ENCODE measurements at regions of chr17 and their contacts with region 1.

Region 1: DNA sequence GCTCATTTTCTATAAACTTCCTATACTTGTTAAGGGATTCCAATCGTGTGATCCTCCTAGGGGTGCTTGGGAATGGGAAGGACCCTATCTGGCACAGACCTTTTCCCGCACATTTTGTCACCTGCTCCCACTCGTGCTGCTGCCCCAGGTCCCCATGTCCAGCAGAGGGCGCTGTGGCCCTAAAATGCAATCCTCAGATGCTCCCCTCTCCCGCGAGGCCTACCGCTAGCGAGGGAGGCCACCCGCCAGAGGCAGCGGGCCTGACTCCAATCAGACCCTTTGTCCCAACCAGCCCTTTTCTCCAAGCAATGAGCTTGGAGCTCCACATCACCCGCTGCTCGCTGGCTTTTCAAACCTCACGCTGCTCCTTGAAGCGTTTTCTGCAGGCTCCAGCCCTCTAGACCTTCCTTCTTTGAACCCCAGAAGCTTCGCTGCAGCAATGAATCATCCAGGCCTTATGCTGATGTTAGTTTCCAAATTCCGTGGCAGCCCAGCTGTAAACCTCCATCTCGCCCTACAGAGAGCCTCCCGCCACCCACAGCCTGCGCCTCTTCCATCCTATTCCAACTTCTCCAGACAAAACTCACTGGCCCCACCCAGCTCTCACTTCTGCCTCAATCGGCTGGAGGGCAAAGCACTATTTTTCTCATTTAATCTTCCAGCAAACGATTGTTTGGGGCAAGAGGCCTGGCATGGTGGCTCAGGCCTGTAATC is 23.6 kb upstream of the FZD2 start:
- DNase-seq: peak; percentile 82
- H3K4me3 ChIP-seq: peak overlapping the region; percentile 31
- H3K27ac ChIP-seq: peak overlapping the region; percentile 71
- H3K27me3 ChIP-seq: no peaks in the 10 kb centered on the region
- CTCF ChIP-seq: peak; percentile 97

Region 2: DNA sequence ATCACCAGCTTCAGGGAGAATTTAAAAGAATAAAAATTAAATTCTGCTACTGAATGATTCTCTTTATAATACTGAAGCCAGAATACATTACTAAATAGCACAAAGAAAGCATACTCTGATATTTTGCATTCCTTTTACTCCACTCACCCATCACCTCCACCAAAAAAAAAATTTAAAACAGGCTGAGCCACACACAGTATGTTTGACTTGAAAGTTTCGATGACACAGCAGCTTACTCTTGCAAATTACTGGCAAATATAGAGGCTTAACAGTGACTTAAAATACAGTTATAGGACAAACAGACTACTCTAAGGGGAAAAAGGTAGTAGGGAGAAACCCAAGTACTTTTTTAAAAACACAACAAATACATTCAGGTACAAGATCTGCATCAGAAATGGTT is 69.7 kb before region 1 on chr17:
- CTCF ChIA-PET with region 1: no interaction called
- POLR2A ChIA-PET with region 1: no interaction called
- DNase-seq: no peak
- H3K4me3 ChIP-seq: no peak overlapping the region
- H3K27ac ChIP-seq: no peak overlapping the region
- H3K27me3 ChIP-seq: no peaks in the 10 kb centered on the region
- CTCF ChIP-seq: no peak

Region 3: DNA sequence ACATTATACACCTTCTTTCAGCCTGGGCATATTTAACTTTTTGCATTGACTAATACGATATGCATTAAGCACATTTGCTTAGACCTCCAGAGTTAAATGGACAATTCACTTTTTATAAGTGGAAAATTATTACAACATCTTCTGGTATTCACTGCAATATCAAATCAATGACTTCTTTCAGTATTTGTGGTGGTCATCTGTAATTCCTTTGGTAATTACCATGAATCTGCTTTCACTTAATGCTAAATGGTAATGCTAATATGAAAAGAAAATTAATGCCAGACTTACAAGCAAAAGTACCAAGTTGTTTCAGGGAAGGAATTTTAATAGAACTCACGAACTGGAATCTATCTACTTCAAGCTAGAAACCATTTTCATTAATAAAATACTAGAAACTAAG is 36.9 kb before region 1 on chr17:
- CTCF ChIA-PET with region 1: interaction called, 10 read pairs
- POLR2A ChIA-PET with region 1: no interaction called
- DNase-seq: no peak
- H3K4me3 ChIP-seq: no peak overlapping the region
- H3K27ac ChIP-seq: no peak overlapping the region
- H3K27me3 ChIP-seq: no peaks in the 10 kb centered on the region
- CTCF ChIP-seq: no peak

Region 4: GRCh38 chr17:44556832-44557606 is 23.3 kb after region 1 on chr17 and contains the start of gene FZD2:
- CTCF ChIA-PET with region 1: interaction called, 33 read pairs
- POLR2A ChIA-PET with region 1: interaction called, 71 read pairs
- DNase-seq: peak; percentile 98
- H3K4me3 ChIP-seq: peak within 1 kb of the TSS; percentile 83
- H3K27ac ChIP-seq: peak within 1 kb of the TSS; percentile 99
- H3K27me3 ChIP-seq: no peaks in the 10 kb centered on the region
- CTCF ChIP-seq: no peak
- polyA plus RNA-seq, gene FZD2: 49.4 and 73.4 TPM in 2 replicates

Region 5: DNA sequence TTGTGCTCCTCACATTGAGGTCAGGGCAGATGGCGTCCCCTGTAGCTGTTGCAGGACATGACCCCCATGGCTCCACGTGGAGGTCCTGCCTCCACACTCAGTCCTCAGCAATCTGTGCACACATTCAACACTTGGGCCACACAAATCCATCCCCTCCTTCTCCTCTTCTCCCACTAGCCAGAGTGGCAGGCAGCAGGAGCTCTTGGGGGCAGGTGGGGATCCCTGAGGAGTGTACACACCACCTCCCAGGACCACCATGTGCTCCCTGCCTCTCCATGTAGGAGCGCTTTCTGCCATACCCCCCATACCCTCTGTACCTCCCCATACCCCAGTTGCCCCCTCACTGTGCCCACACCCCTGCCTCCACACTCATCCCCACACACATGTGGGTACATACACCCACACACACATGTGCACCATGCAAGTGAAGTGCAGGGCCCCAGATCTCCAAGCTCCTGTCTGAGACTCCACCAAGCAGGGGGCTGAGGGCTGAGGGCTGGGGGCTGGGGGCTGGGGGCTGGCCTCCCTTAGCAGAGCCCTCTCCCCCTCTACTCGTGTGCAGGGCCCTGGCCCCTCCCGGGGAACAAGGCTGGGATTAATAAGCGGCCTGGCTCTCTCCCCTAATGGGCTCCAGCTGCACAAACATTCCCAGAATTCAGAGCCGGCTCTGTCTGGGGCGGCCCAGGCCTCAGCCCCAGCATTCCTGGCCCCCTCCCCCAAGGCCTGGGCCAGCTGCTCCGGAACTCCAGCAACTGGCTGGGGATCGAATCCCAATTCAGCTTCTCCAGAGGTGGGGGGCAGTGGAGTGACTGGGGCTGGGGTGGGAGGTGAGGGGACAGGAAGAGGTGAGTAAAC is 74.4 kb after region 1 on chr17:
- CTCF ChIA-PET with region 1: interaction called, 10 read pairs
- POLR2A ChIA-PET with region 1: no interaction called
- DNase-seq: peak; percentile 37
- H3K4me3 ChIP-seq: no peak overlapping the region
- H3K27ac ChIP-seq: no peak overlapping the region
- H3K27me3 ChIP-seq: no peaks in the 10 kb centered on the region
- CTCF ChIP-seq: no peak

Region 6: DNA sequence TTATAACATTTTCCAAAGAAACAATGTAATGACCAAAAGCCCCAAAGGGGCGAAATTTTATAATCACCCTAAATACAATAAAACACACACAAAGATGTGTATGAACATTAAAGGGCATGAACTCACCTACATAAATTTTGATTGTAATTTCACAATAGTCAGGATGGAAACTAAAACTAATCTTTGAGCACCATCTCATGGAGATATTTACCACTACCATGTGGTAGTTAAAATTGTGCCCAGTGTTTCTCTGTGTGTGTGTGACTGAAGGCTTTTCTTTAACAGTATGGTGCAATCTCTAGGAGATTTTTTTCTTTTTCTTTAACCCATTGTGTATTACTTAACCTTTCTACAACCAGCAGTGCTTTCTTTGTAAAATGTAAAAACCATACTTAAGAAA is 102.9 kb after region 1 on chr17:
- CTCF ChIA-PET with region 1: interaction called, 89 read pairs
- POLR2A ChIA-PET with region 1: interaction called, 3 read pairs
- DNase-seq: peak; percentile 26
- H3K4me3 ChIP-seq: no peak overlapping the region
- H3K27ac ChIP-seq: no peak overlapping the region
- H3K27me3 ChIP-seq: peaks cover 4% of the 10 kb centered on the region
- CTCF ChIP-seq: peak; percentile 58

Region 7: GRCh38 chr17:44672479-44673093 is 138.9 kb after region 1 on chr17:
- CTCF ChIA-PET with region 1: interaction called, 31 read pairs
- POLR2A ChIA-PET with region 1: no interaction called
- DNase-seq: no peak
- H3K4me3 ChIP-seq: no peak overlapping the region
- H3K27ac ChIP-seq: no peak overlapping the region
- H3K27me3 ChIP-seq: no peaks in the 10 kb centered on the region
- CTCF ChIP-seq: peak; percentile 76

Measured in AG04450 (cell line).